Gastrocnemius medialis (tissue), 4 donors: ENCODE measurements at regions of chr22 and their contacts with region 1.

Region 1: GRCh38 chr22:25702040-25702439 is 39.9 kb upstream of the MYO18B start:
- DNase-seq: no peak
- ATAC-seq: no peak
- H3K4me3 ChIP-seq: no peak overlapping the region
- H3K27ac ChIP-seq: no peak overlapping the region
- H3K4me1 ChIP-seq: peaks cover 12 to 13% of the 10 kb centered on the region in 2 donors
- H3K27me3 ChIP-seq: no peaks in the 10 kb centered on the region
- CTCF ChIP-seq: peak in 2 of 5 experiments; percentile 16 to 32
- POLR2A ChIP-seq: no peak

Region 2: DNA sequence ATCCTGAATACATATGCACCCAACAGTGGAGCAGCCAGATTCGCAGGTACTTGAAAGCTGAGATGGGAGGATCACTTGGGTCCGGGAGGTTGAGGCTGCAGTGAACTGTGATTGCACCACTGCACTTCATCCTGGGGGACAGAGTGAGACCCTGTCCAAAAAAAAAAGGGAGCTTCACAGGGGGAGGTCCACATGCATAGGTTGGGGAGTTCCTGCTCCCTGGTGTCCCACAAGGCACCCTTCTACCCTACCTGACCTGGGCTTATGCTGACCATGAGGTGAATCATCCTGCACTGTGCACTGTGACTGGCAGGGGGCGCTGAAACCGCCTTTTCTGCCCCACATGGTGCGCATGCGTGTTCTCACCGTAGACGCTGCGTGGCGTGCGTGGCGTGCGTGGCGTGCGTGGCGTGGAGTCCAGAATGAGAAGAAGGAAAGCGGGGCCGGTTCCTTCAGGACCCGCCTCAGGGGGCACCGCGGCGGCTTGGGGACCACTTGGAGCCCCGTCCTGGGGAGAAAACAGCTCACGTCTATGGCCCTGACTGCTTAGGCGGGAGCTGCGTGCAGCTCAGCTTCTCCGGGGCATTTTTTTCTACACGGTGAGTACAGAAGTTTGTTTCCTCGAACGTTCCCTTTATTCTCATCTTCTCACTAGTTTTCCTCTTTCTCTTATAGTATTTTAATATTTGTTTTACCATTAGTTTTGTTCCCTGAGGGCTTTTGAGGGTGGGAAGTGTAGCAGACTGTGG is 254.2 kb before region 1 on chr22:
- in situ Hi-C with region 1: loop called in 1 of 4 experiments (anchors 25 kb)
- intact Hi-C with region 1: no loop called
- DNase-seq: peak; percentile 67 to 88
- ATAC-seq: peak; percentile 96 to 99
- H3K4me3 ChIP-seq: peak overlapping the region; percentile 68 to 90 (median 73)
- H3K27ac ChIP-seq: peak overlapping the region; percentile 79 to 88 (median 82)
- H3K4me1 ChIP-seq: peaks cover 20 to 33% of the 10 kb centered on the region in 2 donors
- H3K27me3 ChIP-seq: no peaks in the 10 kb centered on the region
- CTCF ChIP-seq: peak; percentile 80 to 92 (median 90)
- POLR2A ChIP-seq: peak; percentile 28 to 30

Region 3: GRCh38 chr22:25465949-25466348 is 236.1 kb before region 1 on chr22:
- in situ Hi-C with region 1: loop called in 3 of 4 experiments (anchors 5 to 25 kb)
- intact Hi-C with region 1: loop called (anchors 1 kb)
- DNase-seq: no peak
- ATAC-seq: no peak
- H3K4me3 ChIP-seq: no peak overlapping the region
- H3K27ac ChIP-seq: no peak overlapping the region
- H3K4me1 ChIP-seq: no peaks in the 10 kb centered on the region
- H3K27me3 ChIP-seq: no peaks in the 10 kb centered on the region
- CTCF ChIP-seq: no peak
- POLR2A ChIP-seq: no peak

Region 4: GRCh38 chr22:25598609-25599008 is 103.4 kb before region 1 on chr22:
- in situ Hi-C with region 1: no loop called
- intact Hi-C with region 1: no loop called
- DNase-seq: no peak
- ATAC-seq: no peak
- H3K4me3 ChIP-seq: no peak overlapping the region
- H3K27ac ChIP-seq: no peak overlapping the region
- H3K4me1 ChIP-seq: no peaks in the 10 kb centered on the region
- H3K27me3 ChIP-seq: no peaks in the 10 kb centered on the region
- CTCF ChIP-seq: no peak
- POLR2A ChIP-seq: no peak

Region 5: DNA sequence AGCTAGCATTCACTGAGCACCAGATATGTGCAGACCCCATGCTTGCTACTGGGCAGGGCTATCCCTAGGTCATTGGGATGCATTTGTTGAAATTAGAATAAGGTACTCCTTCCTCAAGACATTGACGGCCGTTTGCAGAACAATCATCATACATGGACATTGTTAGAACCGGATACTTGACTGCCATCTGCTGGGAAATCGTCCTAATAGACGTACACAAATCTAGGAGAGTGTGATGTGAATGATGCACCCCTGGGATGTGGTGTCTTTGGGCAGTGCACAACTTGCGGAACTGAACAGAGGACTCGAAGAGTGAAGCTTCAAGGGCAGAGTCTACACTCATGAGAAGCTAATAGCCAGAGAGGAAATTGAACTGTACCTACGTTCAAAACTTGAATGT is 75.8 kb after region 1 on chr22:
- in situ Hi-C with region 1: no loop called
- intact Hi-C with region 1: loop called (anchors 5 kb)
- DNase-seq: no peak
- ATAC-seq: peak; percentile 19 to 25
- H3K4me3 ChIP-seq: no peak overlapping the region
- H3K27ac ChIP-seq: peak overlapping the region in 1 of 4 donors; percentile 28
- H3K4me1 ChIP-seq: no peaks in the 10 kb centered on the region
- H3K27me3 ChIP-seq: no peaks in the 10 kb centered on the region
- CTCF ChIP-seq: peak in 1 of 5 experiments; percentile 3
- POLR2A ChIP-seq: no peak

Region 6: DNA sequence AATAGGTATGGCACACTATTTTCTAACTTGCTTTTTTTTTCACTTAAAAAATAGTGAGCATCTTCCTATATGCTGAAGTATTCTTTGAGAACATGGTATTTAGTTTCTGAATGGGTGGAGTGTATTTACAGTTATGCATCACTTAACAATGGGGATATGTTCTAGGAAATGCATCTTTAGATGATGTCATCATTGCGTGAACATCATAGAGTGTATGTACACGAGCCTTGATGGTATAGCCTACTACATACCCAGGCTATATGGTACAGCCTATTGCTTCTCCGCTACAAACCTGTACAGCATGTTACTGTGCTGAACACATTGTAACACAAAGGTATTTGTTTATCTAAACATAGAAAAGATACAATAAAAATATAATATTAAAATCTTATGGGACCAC is 602.7 kb after region 1 on chr22:
- in situ Hi-C with region 1: no loop called
- intact Hi-C with region 1: no loop called
- DNase-seq: no peak
- ATAC-seq: no peak
- H3K4me3 ChIP-seq: no peak overlapping the region
- H3K27ac ChIP-seq: no peak overlapping the region
- H3K4me1 ChIP-seq: no peaks in the 10 kb centered on the region
- H3K27me3 ChIP-seq: peaks cover 3 to 9% (median 5%) of the 10 kb centered on the region in 3 donors
- CTCF ChIP-seq: no peak
- POLR2A ChIP-seq: no peak